Heart left ventricle (tissue), 16 donors: ENCODE measurements at regions of chrX and their contacts with region 1.

Region 1: GRCh38 chrX:45602151-45602550 is 401.5 kb upstream of the DIPK2B start:
- DNase-seq: no peak
- ATAC-seq: no peak
- H3K4me3 ChIP-seq: no peak overlapping the region
- H3K27ac ChIP-seq: no peak overlapping the region
- H3K4me1 ChIP-seq: no peaks in the 10 kb centered on the region
- H3K27me3 ChIP-seq: peaks cover 0 to 6% (median 0%) of the 10 kb centered on the region in 9 donors
- CTCF ChIP-seq: no peak
- POLR2A ChIP-seq: no peak

Region 2: DNA sequence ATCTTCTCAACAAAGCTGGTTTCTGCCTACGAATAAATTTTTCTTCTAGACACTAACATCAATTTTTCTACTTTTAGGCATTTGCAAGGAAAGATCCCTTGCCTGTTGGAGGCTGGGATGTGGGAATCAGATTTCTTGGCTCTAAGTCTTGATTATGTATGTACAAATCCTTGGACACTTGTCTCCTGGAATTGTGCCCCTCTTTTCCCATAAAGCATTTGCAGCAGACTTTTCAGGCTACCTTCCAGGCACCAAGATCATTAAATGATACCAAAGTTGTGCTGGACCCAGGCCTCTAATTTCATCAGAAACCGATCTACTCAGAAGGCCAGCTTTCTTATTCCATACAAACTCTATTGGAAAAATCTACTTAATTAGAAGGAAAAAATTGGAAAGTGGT is 62.0 kb before region 1 on chrX:
- intact Hi-C with region 1: loop called in 1 of 10 experiments (anchors 10 kb)
- DNase-seq: no peak
- ATAC-seq: no peak
- H3K4me3 ChIP-seq: no peak overlapping the region
- H3K27ac ChIP-seq: no peak overlapping the region
- H3K4me1 ChIP-seq: no peaks in the 10 kb centered on the region
- H3K27me3 ChIP-seq: peaks cover 0 to 8% (median 0%) of the 10 kb centered on the region in 9 donors
- CTCF ChIP-seq: no peak
- POLR2A ChIP-seq: no peak